MCF 10A (cell line): ENCODE measurements at regions of chr3 and their contacts with region 1.

Region 1: DNA sequence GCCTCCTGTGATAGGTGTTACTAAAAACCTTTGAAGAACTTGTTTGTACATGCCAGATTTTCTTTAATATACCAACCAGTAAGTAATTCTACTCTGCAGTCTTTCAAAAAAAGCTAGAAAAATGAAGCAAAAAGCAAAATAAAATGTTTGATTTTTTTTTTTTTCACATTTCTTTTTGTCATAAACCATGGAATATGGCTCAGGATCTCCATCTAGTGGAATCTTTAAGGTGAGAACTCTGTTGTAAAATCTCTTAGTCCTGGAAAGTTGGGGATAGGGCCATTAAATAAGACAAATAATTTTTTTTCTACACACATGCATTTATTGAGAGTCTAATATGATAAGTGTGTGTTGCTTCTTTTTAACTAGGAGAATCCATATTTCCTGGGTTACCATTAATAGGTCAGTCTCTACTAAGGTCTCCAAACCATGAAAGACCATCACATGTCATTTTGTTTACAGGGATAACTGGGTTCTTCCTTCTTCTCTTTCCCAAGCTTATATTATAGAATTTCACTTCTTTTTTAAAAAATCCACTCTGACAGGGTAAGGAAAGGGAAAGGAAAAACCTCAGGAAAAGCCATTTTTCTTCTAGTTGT is 84.6 kb downstream of the SLC9A9 start:
- DNase-seq: peak; percentile 44
- H3K4me3 Mint-ChIP-seq: no peak overlapping the region
- H3K27ac Mint-ChIP-seq: no peak overlapping the region
- H3K4me1 Mint-ChIP-seq: no peaks in the 10 kb centered on the region
- H3K27me3 Mint-ChIP-seq: no peaks in the 10 kb centered on the region
- CTCF ChIP-seq: peak; percentile 54

Region 2: GRCh38 chr3:143040261-143040879 is 723.3 kb before region 1 on chr3:
- CTCF ChIA-PET with region 1: interaction called, 3 read pairs
- POLR2A ChIA-PET with region 1: no interaction called
- intact Hi-C with region 1: loop called (anchors 5 kb)
- DNase-seq: peak; percentile 25
- H3K4me3 Mint-ChIP-seq: no peak overlapping the region
- H3K27ac Mint-ChIP-seq: no peak overlapping the region
- H3K4me1 Mint-ChIP-seq: no peaks in the 10 kb centered on the region
- H3K27me3 Mint-ChIP-seq: no peaks in the 10 kb centered on the region
- CTCF ChIP-seq: peak; percentile 38

Region 3: GRCh38 chr3:143751643-143752178 is 12.0 kb before region 1 on chr3:
- CTCF ChIA-PET with region 1: interaction called, 17 read pairs
- POLR2A ChIA-PET with region 1: no interaction called
- intact Hi-C with region 1: no loop called
- DNase-seq: no peak
- H3K4me3 Mint-ChIP-seq: no peak overlapping the region
- H3K27ac Mint-ChIP-seq: no peak overlapping the region
- H3K4me1 Mint-ChIP-seq: no peaks in the 10 kb centered on the region
- H3K27me3 Mint-ChIP-seq: no peaks in the 10 kb centered on the region
- CTCF ChIP-seq: no peak